ENCODE measurements at regions of chr6 and their contacts with region 1.

Region 1: GRCh38 chr6:111057074-111057752 is 30.1 kb upstream of the SLC16A10 start:
- DNase-seq: no peak
- ATAC-seq: peak; percentile 77
- H3K4me3 Mint-ChIP-seq: no peak overlapping the region
- H3K27ac Mint-ChIP-seq: no peak overlapping the region
- H3K4me1 Mint-ChIP-seq: peaks cover 2% of the 10 kb centered on the region
- H3K27me3 Mint-ChIP-seq: peaks cover 4% of the 10 kb centered on the region
- CTCF ChIP-seq: peak; percentile 74

Region 2: GRCh38 chr6:111011360-111012142 is 45.7 kb before region 1 on chr6:
- CTCF ChIA-PET with region 1: interaction called, 15 read pairs
- POLR2A ChIA-PET with region 1: no interaction called
- intact Hi-C with region 1: no loop called
- DNase-seq: no peak
- ATAC-seq: peak; percentile 62
- H3K4me3 Mint-ChIP-seq: no peak overlapping the region
- H3K27ac Mint-ChIP-seq: peak overlapping the region; percentile 31
- H3K4me1 Mint-ChIP-seq: peaks cover 4% of the 10 kb centered on the region
- H3K27me3 Mint-ChIP-seq: no peaks in the 10 kb centered on the region
- CTCF ChIP-seq: peak; percentile 73

Region 3: DNA sequence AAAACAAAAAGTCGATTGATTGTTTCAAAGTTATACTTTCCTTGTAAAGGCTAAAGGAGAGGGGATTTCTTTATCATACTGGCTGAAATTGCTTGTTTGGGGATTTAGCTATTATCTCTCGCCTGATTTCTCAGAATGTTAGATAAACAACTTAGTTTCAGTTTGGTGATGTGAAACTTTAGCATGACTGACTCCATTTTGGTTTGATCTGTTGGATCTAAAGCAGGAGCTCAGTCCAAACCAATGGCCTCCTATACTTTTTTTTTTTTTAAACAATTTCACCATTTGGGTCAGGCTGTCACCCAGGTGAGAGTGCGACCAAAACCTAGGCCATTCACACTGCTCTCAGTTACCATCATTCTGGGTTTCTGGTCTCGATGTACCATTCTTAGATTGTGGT is 15.3 kb before region 1 on chr6:
- CTCF ChIA-PET with region 1: interaction called, 18 read pairs
- POLR2A ChIA-PET with region 1: no interaction called
- intact Hi-C with region 1: no loop called
- DNase-seq: no peak
- ATAC-seq: no peak
- H3K4me3 Mint-ChIP-seq: no peak overlapping the region
- H3K27ac Mint-ChIP-seq: no peak overlapping the region
- H3K4me1 Mint-ChIP-seq: peaks cover 6% of the 10 kb centered on the region
- H3K27me3 Mint-ChIP-seq: peaks cover 2% of the 10 kb centered on the region
- CTCF ChIP-seq: no peak

Region 4: DNA sequence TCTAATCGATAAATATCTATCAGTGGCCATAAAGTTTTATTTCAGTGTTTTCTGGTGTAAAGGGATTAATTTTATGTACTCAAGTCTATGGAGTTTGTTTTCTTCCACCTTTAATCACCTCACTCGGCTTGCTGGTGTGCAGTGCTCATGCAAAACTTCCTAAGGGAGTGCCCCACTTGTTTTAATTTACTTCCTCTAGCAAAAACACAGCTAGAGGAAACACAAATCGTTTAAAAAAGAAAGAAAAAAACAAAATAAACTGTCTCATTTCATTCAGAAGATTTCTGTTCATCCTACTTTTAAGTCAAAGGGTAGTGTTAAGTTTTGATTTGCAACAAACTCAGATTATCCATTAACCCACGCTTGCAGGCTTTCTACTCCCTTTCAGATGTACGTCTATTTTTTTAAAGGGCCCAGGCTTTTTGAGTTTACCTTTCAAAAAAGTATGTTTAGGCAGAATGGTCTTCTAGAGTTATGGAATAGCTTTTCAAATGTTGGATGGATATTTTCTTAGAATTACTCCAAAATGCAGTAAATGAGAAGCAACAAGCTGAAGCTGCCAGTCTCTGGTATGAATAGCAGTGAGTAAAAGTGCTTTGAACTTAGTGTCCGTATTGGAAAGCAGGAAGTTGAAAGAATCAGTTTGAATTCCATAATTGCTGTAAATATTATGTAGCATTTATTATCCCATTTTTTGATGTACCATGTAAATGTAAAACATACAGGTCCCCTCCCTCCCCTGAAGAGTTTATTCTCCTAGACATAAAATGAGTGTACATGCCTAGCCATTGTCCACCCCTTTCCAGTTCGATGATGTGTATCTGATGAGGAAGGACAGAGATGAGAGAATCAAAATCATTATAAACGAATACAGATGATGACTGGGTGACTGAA is 143.4 kb after region 1 on chr6:
- CTCF ChIA-PET with region 1: interaction called, 34 read pairs
- POLR2A ChIA-PET with region 1: interaction called, 4 read pairs
- intact Hi-C with region 1: no loop called
- DNase-seq: no peak
- ATAC-seq: no peak
- H3K4me3 Mint-ChIP-seq: no peak overlapping the region
- H3K27ac Mint-ChIP-seq: no peak overlapping the region
- H3K4me1 Mint-ChIP-seq: peaks cover 16% of the 10 kb centered on the region
- H3K27me3 Mint-ChIP-seq: no peaks in the 10 kb centered on the region
- CTCF ChIP-seq: no peak

Region 5: DNA sequence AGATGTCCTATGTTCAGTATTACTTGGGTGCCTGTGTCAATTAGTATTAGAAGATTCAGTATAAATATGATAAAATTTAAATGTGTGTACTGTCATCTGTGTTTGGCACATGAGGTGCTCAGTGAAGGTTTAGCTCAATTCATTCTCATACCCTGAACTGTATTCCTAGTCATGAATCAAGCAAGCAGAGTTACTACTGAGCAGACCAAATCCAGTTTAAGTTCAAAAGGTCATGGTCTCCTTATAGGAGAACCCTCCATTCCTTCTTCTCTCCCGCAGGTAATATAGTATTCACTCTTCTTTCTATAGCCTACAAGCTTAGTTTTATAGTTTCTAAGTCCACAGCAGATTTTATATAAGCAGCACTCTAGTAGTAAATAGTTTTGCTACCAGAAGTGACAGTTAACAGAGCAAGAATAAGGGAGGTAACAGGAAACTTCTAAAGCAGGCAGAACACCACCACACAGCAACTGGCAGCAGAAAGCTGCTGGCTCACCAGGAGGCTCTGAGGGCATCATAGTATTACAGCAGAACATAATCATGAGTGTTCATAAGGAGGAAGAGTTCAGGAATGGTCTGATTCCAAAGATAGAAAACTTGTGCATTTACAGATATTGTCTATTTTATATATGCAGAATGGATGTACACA is 163.3 kb after region 1 on chr6:
- CTCF ChIA-PET with region 1: interaction called, 32 read pairs
- POLR2A ChIA-PET with region 1: no interaction called
- intact Hi-C with region 1: no loop called
- DNase-seq: no peak
- ATAC-seq: no peak
- H3K4me3 Mint-ChIP-seq: no peak overlapping the region
- H3K27ac Mint-ChIP-seq: no peak overlapping the region
- H3K4me1 Mint-ChIP-seq: peaks cover 9% of the 10 kb centered on the region
- H3K27me3 Mint-ChIP-seq: no peaks in the 10 kb centered on the region
- CTCF ChIP-seq: no peak